Activated B cell treated with CpG ODN at 0.5 μM for 24 hours (primary cell): ENCODE measurements at regions of chr1 and their contacts with region 1.

Region 1: DNA sequence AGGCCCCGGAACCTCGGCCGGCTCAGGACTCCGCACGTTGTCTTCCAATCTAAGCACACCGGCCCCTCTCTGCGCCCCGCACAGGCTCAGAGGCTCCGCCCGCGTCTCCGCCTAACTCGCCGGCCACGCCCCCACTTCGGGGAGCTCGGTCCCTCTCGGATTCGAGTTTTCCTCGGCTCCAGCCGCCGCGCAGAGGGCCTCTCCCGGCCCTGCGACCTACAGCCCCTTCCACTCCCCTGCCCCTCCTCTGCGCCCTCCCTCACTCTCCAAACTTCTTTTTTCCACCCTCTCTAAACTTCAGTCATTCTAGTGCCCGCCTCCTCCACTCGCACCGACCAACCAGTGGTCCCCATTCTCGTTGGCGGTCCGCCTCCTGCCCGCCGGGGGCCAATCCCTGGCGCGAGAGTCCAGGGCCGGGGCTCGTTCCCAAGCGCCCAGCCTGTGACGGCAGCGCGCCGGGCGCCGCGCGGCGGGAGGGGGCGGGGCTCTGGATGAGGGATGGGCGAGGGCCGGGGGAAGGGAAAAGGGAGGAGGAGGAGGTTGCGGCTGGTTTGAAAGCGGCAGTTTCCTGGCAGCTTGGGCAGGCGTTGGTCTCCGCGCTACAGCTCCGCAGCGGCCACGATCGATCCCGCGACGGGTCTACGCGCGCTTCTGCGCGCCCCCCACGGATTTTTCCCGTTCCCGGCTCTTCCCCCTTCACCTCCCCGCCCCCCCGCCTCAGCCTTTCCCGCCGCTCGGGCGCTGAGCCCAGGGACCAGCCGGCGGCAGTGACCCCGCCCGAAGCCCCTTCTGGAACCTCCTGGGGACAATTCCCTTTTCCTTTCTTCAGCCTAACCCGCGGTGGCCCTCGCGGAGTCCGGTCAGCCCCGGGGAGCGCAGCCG is at the start of gene MAGI3:
- DNase-seq: peak; percentile 83
- ATAC-seq: peak; percentile 98
- H3K4me3 Mint-ChIP-seq: peak within 1 kb of the TSS; percentile 95
- H3K27ac Mint-ChIP-seq: peak within 1 kb of the TSS; percentile 77
- H3K4me1 Mint-ChIP-seq: peaks cover 18% of the 10 kb centered on the region
- H3K27me3 Mint-ChIP-seq: peaks cover 29% of the 10 kb centered on the region
- CTCF ChIP-seq: no peak
- total RNA-seq, gene MAGI3: 0.83 and 1.0 TPM in 2 replicates

Region 2: GRCh38 chr1:112955781-112956543 is 434.2 kb before region 1 on chr1 and contains the start of gene SLC16A1:
- CTCF ChIA-PET with region 1: no interaction called
- POLR2A ChIA-PET with region 1: no interaction called
- intact Hi-C with region 1: loop called (anchors 10 kb)
- DNase-seq: peak; percentile 89
- ATAC-seq: peak; percentile 82
- H3K4me3 Mint-ChIP-seq: peak within 1 kb of the TSS; percentile 98
- H3K27ac Mint-ChIP-seq: peak within 1 kb of the TSS; percentile 98
- H3K4me1 Mint-ChIP-seq: peaks cover 49% of the 10 kb centered on the region
- H3K27me3 Mint-ChIP-seq: no peaks in the 10 kb centered on the region
- CTCF ChIP-seq: no peak
- total RNA-seq, gene SLC16A1: 17.8 and 17.9 TPM in 2 replicates